Mammary epithelial cell (primary cell): ENCODE measurements at regions of chr2 and their contacts with region 1.

Region 1: GRCh38 chr2:150528861-150529801 is 41.7 kb upstream of the RND3 start:
- DNase-seq: peak; percentile 95
- H3K4me3 ChIP-seq: no peak overlapping the region
- H3K27ac ChIP-seq: peak overlapping the region; percentile 95
- H3K4me1 ChIP-seq: peaks cover 54% of the 10 kb centered on the region
- H3K27me3 ChIP-seq: no peaks in the 10 kb centered on the region
- CTCF ChIP-seq: no peak

Region 2: DNA sequence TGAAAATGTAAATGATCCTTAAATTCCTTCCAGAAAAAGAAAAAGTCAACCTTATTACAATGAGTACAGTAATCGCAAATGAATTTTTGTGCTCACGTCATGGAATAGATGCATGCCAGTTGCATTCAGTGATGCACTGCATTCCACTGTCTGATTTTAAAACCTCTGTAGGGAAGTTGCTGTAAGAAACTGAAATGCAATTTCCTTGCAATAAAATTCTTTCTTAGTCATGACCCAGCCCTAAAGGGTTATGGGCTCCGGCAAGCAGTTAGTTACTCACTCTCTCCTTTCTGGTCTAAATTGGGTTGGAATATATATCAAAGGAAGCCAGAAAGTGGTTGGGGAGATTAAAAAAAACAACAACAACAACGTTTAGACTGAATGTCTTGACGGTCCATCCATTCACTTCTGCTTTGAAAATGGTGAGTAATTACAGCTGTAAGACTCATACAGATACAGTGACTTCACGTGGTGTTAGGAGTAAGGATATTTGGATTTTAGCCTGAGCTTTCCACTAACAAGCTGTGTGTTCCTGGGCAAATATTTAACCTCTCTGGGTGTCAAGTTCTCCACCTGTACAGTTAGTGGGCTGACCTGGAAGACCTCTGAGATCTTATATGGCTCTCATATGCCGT is 33.0 kb before region 1 on chr2:
- CTCF ChIA-PET with region 1: no interaction called
- dilution Hi-C with region 1: no loop called
- in situ Hi-C with region 1: loop called in 1 of 2 experiments (anchors 5 kb)
- intact Hi-C with region 1: loop called (anchors 1 kb)
- DNase-seq: peak; percentile 92
- H3K4me3 ChIP-seq: peak overlapping the region in 1 of 3 experiments; percentile 21
- H3K27ac ChIP-seq: peak overlapping the region; percentile 85
- H3K4me1 ChIP-seq: peaks cover 13% of the 10 kb centered on the region
- H3K27me3 ChIP-seq: no peaks in the 10 kb centered on the region
- CTCF ChIP-seq: no peak

Region 3: DNA sequence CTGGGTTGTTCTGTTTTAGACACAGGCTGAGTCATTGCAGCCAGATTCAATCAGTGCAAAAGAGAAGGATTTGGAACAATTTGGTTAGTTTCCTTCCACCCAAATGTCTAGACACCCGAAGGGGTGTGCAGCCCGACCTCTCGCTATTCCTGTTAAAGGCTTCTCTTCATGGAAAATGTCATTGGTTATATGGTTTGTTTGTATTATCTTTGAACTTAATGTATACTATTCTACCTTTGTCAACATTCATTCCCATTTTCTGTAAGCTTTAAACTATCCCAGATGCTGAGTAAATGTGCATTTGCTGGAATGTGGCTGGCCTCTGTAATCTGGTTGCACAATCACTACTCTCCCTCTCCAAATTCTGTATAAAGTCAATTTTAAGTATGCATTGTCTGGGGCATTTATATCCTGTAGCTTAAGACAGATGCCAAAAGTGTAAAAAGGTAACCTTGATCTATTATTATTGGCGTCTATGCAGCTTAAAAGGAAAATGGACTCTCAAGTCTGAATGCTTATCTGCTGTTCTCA is 38.7 kb after region 1 on chr2:
- CTCF ChIA-PET with region 1: no interaction called
- dilution Hi-C with region 1: loop called (anchors 5 kb)
- in situ Hi-C with region 1: no loop called
- intact Hi-C with region 1: loop called (anchors 2 kb)
- DNase-seq: no peak
- H3K4me3 ChIP-seq: no peak overlapping the region
- H3K27ac ChIP-seq: no peak overlapping the region
- H3K4me1 ChIP-seq: peaks cover 25% of the 10 kb centered on the region
- H3K27me3 ChIP-seq: no peaks in the 10 kb centered on the region
- CTCF ChIP-seq: no peak

Region 4: DNA sequence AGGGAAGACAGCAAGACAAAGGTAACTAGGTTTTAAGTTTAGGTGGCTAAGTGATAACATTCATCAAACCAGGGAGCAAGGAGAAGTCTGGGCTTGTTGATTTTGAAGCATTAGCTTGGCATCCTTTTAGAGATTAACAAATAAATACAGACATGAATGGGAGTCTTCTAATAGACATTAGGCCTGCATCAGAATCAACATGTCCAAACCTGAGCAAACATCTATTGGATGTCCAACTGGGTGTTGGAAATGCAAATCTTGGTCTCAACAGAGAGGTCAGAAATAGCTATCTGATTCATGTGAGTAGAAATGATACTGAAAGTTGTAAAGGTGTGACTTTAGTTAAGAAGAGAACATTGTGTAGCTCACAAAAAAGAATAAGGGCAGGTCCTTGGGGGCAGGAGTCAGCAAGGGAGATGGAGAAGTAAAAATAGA is 43.8 kb after region 1 on chr2:
- CTCF ChIA-PET with region 1: no interaction called
- dilution Hi-C with region 1: loop called (anchors 5 kb)
- in situ Hi-C with region 1: no loop called
- intact Hi-C with region 1: loop called (anchors 2 kb)
- DNase-seq: peak; percentile 92
- H3K4me3 ChIP-seq: no peak overlapping the region
- H3K27ac ChIP-seq: peak overlapping the region; percentile 78
- H3K4me1 ChIP-seq: peaks cover 35% of the 10 kb centered on the region
- H3K27me3 ChIP-seq: no peaks in the 10 kb centered on the region
- CTCF ChIP-seq: no peak